ENCODE measurements at regions of chrX and their contacts with region 1.

Region 1: GRCh38 chrX:107398115-107398514 is 51.3 kb upstream of the FRMPD3 start:
- DNase-seq: no peak
- ATAC-seq: no peak
- H3K4me3 ChIP-seq: no peak overlapping the region
- H3K27ac ChIP-seq: no peak overlapping the region
- H3K4me1 ChIP-seq: no peaks in the 10 kb centered on the region
- H3K27me3 ChIP-seq: peaks cover 0 to 21% (median 0%) of the 10 kb centered on the region in 4 donors
- CTCF ChIP-seq: no peak

Region 2: DNA sequence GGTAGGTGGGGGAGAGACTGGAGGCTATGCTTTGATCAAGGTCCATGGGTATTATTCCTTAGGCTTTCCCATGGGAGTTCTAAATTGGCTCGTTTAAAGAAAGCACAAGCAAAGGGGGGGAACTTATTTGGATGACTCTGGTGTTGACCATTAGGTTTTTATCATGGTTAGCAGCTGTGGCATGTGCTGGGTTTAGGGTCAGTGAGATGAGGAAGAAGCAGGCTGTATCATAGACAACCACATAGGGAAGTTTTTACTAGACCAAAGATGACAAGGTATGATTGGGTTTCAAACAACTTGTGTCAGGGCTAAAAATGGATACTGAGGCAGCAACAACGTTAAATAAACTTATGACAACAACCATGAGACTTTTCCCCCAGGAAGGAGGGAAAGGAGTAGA is 94.0 kb before region 1 on chrX:
- intact Hi-C with region 1: loop called in 1 of 3 experiments (anchors 5 kb)
- DNase-seq: no peak
- ATAC-seq: no peak
- H3K4me3 ChIP-seq: no peak overlapping the region
- H3K27ac ChIP-seq: no peak overlapping the region
- H3K4me1 ChIP-seq: no peaks in the 10 kb centered on the region
- H3K27me3 ChIP-seq: peaks cover 0 to 12% (median 0%) of the 10 kb centered on the region in 4 donors
- CTCF ChIP-seq: no peak